ENCODE measurements at regions of chr1 and their contacts with region 1.

Region 1: DNA sequence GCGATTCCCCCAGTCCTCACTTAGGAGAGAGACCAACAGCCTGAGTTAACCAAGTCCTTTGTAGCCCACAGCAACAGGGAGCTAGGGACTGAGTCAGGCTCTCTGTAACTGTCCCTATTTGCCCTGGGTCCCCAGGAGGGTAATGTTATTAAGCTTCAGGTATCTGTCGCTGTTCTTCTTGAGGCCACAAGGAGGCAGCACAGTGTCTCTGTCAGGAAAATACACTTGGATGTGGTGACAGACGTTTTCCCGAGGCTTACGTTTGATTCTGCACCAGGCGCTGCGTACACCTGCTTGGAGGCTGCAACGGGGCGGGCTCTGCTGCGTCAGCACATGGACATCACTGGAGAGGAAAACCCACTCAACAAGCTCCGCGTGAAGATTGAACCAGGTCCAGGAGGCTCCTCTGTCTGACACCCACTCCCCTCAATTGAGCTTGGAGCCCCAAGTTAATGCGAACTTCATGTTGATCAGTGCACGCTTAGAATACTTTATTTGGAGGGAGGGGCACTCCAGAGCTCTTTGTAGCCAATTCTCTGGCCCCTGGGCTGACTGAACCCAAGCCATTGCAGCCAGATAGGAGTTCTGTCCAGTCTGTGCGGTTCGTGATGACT is 10.7 kb upstream of the ELF3 start:
- DNase-seq: peak; percentile 36
- ATAC-seq: peak; percentile 92
- H3K4me3 Mint-ChIP-seq: no peak overlapping the region
- H3K27ac Mint-ChIP-seq: no peak overlapping the region
- H3K4me1 Mint-ChIP-seq: no peaks in the 10 kb centered on the region
- H3K27me3 Mint-ChIP-seq: no peaks in the 10 kb centered on the region
- CTCF ChIP-seq: peak; percentile 75

Region 2: DNA sequence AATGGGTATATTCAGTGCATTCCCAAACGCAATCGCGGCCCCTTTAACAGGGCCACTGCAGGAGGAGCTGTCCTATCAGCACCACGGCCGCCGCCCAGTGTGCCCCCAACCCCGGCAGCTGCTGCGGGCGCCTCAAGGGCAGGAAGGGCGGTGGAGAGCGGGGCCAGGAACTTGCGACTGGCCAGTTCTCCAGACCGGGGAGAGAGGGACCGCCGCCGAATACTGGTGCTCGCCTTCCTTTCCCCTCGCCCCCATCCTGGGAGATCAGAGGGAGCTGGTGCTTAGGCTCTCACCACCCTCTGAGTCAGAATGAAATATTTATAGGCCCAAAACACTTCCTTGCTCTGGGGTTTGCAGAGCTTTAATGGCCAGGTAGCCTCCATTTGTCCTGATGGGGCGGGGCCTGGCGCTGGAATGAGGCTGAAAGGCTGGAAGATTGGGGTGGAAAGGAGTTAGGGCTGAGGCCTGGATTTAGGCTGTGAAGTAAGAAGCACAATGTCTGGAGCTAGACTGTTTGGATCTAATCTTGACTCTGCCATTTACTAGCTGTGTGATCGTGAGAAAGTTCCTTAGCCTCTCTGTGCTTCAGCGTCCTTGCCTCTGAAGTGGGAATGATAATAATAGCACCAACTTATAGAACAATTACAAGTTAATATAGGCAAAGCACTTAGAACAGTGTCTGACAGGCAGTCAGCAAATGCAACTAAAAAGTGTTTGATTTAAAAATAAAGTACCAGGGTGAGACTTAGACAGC is 385.3 kb before region 1 on chr1:
- CTCF ChIA-PET with region 1: no interaction called
- POLR2A ChIA-PET with region 1: no interaction called
- intact Hi-C with region 1: no loop called
- DNase-seq: peak; percentile 13
- ATAC-seq: no peak
- H3K4me3 Mint-ChIP-seq: no peak overlapping the region
- H3K27ac Mint-ChIP-seq: no peak overlapping the region
- H3K4me1 Mint-ChIP-seq: no peaks in the 10 kb centered on the region
- H3K27me3 Mint-ChIP-seq: peaks cover 2% of the 10 kb centered on the region
- CTCF ChIP-seq: no peak

Region 3: GRCh38 chr1:201877877-201878401 is 121.8 kb before region 1 on chr1:
- CTCF ChIA-PET with region 1: interaction called, 17 read pairs
- POLR2A ChIA-PET with region 1: no interaction called
- intact Hi-C with region 1: no loop called
- DNase-seq: peak; percentile 44
- ATAC-seq: peak; percentile 73
- H3K4me3 Mint-ChIP-seq: no peak overlapping the region
- H3K27ac Mint-ChIP-seq: peak overlapping the region; percentile 35
- H3K4me1 Mint-ChIP-seq: no peaks in the 10 kb centered on the region
- H3K27me3 Mint-ChIP-seq: no peaks in the 10 kb centered on the region
- CTCF ChIP-seq: peak; percentile 72

Region 4: GRCh38 chr1:201970334-201971159 is 29.2 kb before region 1 on chr1:
- CTCF ChIA-PET with region 1: interaction called, 16 read pairs
- POLR2A ChIA-PET with region 1: no interaction called
- intact Hi-C with region 1: no loop called
- DNase-seq: no peak
- ATAC-seq: no peak
- H3K4me3 Mint-ChIP-seq: no peak overlapping the region
- H3K27ac Mint-ChIP-seq: no peak overlapping the region
- H3K4me1 Mint-ChIP-seq: no peaks in the 10 kb centered on the region
- H3K27me3 Mint-ChIP-seq: no peaks in the 10 kb centered on the region
- CTCF ChIP-seq: no peak

Region 5: DNA sequence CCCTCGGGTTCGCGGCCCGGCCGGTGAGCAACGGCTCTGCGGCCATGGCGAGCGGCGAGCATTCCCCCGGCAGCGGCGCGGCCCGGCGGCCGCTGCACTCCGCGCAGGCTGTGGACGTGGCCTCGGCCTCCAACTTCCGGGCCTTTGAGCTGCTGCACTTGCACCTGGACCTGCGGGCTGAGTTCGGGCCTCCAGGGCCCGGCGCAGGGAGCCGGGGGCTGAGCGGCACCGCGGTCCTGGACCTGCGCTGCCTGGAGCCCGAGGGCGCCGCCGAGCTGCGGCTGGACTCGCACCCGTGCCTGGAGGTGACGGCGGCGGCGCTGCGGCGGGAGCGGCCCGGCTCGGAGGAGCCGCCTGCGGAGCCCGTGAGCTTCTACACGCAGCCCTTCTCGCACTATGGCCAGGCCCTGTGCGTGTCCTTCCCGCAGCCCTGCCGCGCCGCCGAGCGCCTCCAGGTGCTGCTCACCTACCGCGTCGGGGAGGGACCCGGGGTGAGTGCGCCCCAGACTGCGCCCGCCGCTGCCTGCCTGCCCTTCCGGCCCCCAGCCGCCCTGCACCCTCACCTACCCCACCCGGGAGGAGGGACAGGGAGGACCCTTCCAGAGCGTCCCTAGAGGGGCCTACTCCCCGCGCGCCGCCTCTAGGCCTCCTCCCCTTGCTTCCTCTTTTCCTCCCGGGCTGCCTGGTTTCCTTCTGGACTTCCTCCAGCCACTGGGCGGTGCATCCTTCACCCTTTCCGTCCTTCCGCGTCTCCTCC is 16.9 kb before region 1 on chr1 and contains the start of gene RNPEP:
- CTCF ChIA-PET with region 1: interaction called, 34 read pairs
- POLR2A ChIA-PET with region 1: interaction called, 3 read pairs
- intact Hi-C with region 1: no loop called
- DNase-seq: peak; percentile 65
- ATAC-seq: peak; percentile 82
- H3K4me3 Mint-ChIP-seq: peak within 1 kb of the TSS; percentile 92
- H3K27ac Mint-ChIP-seq: peak within 1 kb of the TSS; percentile 87
- H3K4me1 Mint-ChIP-seq: peaks cover 22% of the 10 kb centered on the region
- H3K27me3 Mint-ChIP-seq: no peaks in the 10 kb centered on the region
- CTCF ChIP-seq: no peak
- total RNA-seq, gene RNPEP: 37.8 to 39.5 TPM

Region 6: DNA sequence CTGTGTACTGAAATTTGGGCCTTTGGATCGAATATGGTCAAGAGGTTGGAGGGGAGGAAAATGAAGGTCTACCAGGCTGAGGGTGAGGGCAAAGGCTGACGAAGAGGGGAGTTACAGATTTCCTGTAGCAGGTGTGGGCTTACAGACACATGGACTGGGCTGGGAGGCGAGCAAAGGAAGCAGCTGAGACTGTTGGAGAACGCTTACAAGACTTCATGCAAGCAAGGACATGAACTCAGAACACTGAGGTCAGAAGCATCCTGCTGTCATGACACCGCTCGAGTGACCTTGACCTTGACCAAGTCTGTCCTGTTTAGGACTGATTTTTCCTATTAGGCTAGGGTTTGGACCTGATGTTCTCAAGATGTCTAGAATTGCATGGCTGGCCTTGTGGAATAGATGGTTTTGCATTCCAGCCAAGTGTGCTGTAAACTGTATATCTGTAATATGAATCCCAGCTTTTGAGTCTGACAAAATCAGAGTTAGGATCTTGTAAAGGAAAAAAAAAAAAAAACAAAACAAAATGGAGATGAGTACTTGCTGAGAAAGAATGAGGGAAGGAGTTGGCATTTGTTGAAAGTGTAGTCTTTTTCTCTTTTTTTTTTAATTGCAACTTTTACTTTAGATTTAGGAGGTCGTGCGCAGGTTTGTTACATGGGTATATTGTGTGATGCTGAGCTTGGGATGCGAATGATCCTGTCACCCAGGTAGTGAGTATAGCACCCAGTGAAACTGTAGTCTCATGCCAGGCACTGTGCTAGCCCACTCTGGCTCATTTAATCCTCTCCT is 16.5 kb after region 1 on chr1:
- CTCF ChIA-PET with region 1: interaction called, 22 read pairs
- POLR2A ChIA-PET with region 1: interaction called, 3 read pairs
- intact Hi-C with region 1: no loop called
- DNase-seq: no peak
- ATAC-seq: no peak
- H3K4me3 Mint-ChIP-seq: no peak overlapping the region
- H3K27ac Mint-ChIP-seq: no peak overlapping the region
- H3K4me1 Mint-ChIP-seq: no peaks in the 10 kb centered on the region
- H3K27me3 Mint-ChIP-seq: peaks cover 4% of the 10 kb centered on the region
- CTCF ChIP-seq: no peak

Region 7: DNA sequence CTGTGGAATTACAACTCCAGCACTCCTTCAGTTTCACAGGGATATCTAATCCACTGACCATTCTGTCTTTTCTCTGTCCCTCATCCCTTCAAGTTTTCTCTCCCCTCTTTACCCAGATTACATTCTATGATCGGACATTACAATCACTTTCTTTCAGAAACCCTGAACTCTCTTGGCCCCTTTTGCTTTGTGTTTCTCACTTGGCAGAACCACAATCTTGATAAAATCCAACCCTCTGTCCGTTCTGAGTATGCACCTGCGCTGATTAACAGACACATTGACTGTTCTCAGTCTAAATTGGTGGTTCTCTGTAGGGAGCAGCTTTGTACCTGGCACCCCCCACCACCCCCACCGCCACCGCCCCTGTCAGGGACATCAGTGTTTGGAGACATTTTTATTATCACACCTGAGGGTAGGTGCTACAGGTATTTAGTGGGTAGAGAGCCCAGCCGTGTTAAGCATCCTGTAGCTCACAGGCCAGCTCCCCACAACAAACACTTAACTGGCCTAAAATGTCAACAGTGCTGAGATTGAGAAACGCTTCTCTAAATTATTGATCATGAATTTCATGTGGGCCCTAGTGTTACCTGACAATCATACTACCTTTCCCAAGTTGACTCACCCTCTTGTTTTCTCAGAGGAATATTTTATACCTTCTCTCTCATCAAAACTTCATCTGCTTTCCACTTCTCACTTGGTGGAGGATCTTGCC is 31.9 kb after region 1 on chr1:
- CTCF ChIA-PET with region 1: no interaction called
- POLR2A ChIA-PET with region 1: no interaction called
- intact Hi-C with region 1: no loop called
- DNase-seq: no peak
- ATAC-seq: no peak
- H3K4me3 Mint-ChIP-seq: no peak overlapping the region
- H3K27ac Mint-ChIP-seq: no peak overlapping the region
- H3K4me1 Mint-ChIP-seq: no peaks in the 10 kb centered on the region
- H3K27me3 Mint-ChIP-seq: no peaks in the 10 kb centered on the region
- CTCF ChIP-seq: no peak

Region 8: GRCh38 chr1:202112839-202113672 is 113.3 kb after region 1 on chr1:
- CTCF ChIA-PET with region 1: interaction called, 22 read pairs
- POLR2A ChIA-PET with region 1: no interaction called
- intact Hi-C with region 1: no loop called
- DNase-seq: no peak
- ATAC-seq: no peak
- H3K4me3 Mint-ChIP-seq: no peak overlapping the region
- H3K27ac Mint-ChIP-seq: no peak overlapping the region
- H3K4me1 Mint-ChIP-seq: peaks cover 2% of the 10 kb centered on the region
- H3K27me3 Mint-ChIP-seq: no peaks in the 10 kb centered on the region
- CTCF ChIP-seq: no peak

Region 9: DNA sequence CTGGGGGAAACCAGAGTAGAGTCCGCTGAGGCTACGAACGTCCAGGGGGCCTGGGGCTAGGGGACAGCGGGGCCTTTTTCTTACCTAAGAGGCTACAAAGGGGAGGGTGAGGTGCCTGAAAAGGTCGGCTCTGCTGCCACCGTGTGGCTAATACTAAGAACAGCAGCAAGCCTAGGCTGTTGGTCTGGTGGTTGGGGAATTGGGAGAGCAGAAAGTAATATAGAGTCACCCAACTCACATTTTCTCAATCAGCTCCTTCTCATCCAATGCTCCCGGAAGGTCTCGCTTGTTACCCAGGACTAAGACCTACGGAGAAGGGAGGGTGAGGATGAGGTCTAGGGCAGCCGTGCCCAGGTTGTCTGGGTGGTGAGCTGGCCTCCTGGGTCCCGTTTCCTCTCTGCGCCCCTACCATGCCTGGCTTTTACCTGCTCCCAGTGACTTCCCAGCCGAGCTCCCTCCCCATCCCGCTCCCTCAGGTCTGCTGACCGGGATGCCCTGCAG is 135.5 kb after region 1 on chr1:
- CTCF ChIA-PET with region 1: interaction called, 48 read pairs
- POLR2A ChIA-PET with region 1: no interaction called
- intact Hi-C with region 1: no loop called
- DNase-seq: peak; percentile 60
- ATAC-seq: peak; percentile 96
- H3K4me3 Mint-ChIP-seq: no peak overlapping the region
- H3K27ac Mint-ChIP-seq: no peak overlapping the region
- H3K4me1 Mint-ChIP-seq: no peaks in the 10 kb centered on the region
- H3K27me3 Mint-ChIP-seq: no peaks in the 10 kb centered on the region
- CTCF ChIP-seq: peak; percentile 90